ENCODE measurements at regions of chr1 and their contacts with region 1.

Region 1: DNA sequence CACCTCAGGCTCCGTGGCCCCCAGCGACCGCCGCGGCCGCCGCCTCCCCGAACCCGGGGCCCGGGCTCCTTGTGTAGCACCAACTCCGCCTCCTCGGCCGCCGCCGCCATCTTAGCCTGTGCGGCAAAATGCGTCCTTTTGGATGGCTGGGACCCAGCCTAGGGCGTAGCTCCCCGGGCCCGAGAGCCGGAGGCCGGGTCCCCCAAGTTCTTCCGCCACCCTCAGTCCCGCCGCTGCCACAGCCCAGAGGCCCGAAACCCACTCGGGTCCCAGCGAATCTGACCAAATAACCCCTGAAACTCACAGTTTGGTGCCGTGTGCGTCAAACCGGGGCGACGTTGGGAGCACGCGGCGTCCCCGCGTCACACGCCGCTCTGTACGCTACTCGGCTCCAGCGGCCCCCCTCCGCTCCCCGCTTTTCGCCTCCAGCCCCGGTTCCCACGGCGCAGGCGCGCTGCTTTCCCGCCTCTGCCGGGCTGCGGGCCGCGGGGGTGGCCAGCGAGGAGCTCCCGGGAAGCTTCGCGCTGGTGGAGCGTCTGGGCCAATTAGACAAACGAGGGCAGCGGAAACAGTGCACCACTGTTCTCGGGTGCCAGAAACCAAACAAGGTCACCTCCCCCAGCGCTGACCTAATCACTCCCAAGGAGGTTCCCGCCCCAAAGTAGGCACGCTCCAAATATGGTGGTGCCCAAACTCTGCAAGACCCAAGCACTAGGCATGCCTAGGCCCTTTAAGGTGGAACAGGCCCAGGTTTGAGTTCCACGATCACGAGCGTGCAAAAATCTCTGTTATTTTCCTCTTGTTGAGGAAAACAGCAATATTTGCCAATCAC is at the start of gene ZNF644:
- DNase-seq: peak; percentile 57
- H3K4me3 ChIP-seq: peak within 1 kb of the TSS; percentile 63
- CTCF ChIP-seq: no peak

Region 2: GRCh38 chr1:90925928-90926869 is 95.7 kb before region 1 on chr1:
- in situ Hi-C with region 1: loop called (anchors 5 kb)
- DNase-seq: peak; percentile 55
- H3K4me3 ChIP-seq: no peak overlapping the region
- CTCF ChIP-seq: no peak

Region 3: DNA sequence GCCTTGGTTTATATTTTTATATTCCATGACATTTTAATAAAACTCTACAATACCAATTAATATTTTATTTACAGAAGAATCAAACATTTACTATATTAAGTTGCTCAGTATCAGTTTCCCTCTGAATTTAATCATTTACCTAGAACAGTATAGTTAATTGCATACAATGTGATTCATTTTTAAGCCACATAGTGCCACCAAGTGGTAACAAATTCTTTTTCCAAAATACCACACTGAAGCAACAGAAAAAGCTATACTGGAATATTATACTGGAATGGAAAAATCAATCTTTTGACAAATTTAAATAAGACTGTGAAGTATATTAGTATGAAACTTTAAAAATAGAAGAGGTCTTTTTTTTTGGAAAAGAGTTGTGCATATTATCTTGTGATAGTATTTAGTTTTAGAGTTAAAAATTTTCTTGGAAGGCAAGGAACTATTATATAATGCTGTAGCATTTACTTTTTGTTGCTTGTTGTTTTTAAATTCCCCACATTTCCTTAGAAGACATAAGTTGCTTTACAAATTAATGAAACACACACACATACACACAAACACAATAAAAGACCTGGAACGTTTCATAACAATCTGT is 57.4 kb before region 1 on chr1:
- in situ Hi-C with region 1: no loop called
- DNase-seq: peak; percentile 3
- H3K4me3 ChIP-seq: no peak overlapping the region
- CTCF ChIP-seq: no peak

Measured in astrocyte of the cerebellum (primary cell).